ENCODE measurements at regions of chr15 and their contacts with region 1.

Region 1: DNA sequence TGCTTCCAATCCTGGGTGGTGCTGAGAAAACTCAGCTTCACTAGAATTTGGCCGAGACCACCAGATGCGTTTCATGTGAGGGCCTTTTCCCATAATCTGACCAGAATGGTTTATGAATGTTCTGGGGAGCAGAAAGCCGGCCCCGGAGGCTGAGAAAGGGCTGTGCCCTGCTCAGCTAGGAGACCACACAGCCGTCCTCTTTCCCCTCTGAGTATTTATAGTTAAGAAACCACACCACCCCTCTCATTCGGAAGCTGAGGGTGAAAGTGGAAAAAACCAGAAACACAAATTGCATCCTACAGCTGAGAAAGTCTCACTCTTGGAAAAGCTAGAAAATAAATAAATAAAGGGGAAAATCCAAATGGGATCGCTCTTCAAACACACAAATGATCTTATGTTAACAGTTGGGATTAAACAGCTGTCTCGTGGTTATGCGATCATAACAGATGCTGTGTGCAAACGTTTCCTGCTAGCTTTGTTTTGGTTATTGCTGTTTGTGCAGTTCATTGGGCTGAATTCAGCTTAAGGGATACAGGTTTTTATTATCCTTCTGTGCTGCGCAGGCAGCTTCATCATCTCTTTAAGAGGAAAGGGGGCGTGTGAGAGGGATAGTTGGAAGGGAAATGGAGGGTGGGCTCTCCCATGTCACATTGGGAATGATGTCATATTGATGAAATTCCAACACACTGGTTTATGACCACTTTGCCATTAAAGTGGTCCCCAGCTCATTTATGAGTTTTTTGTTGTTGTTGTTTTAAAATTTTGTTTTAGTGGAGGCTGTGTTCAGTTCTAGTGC is 1026.2 kb upstream of the NR2F2 start:
- DNase-seq: no peak
- H3K4me3 ChIP-seq: no peak overlapping the region
- H3K4me3 Mint-ChIP-seq: no peak overlapping the region
- H3K27ac ChIP-seq: no peak overlapping the region
- H3K27ac Mint-ChIP-seq: no peak overlapping the region
- H3K4me1 ChIP-seq: no peaks in the 10 kb centered on the region
- H3K4me1 Mint-ChIP-seq: peaks cover 0 to 2% (median 0%) of the 10 kb centered on the region in 4 donors
- H3K27me3 ChIP-seq: no peaks in the 10 kb centered on the region
- H3K27me3 Mint-ChIP-seq: peaks cover 0 to 2% of the 10 kb centered on the region in 2 donors

Region 2: GRCh38 chr15:95235033-95235432 is 69.3 kb before region 1 on chr15:
- CTCF ChIA-PET with region 1: no interaction called
- POLR2A ChIA-PET with region 1: no interaction called
- intact Hi-C with region 1: no loop called
- DNase-seq: no peak
- H3K4me3 ChIP-seq: no peak overlapping the region
- H3K4me3 Mint-ChIP-seq: no peak overlapping the region
- H3K27ac ChIP-seq: no peak overlapping the region
- H3K27ac Mint-ChIP-seq: no peak overlapping the region
- H3K4me1 ChIP-seq: no peaks in the 10 kb centered on the region
- H3K4me1 Mint-ChIP-seq: no peaks in the 10 kb centered on the region
- H3K27me3 ChIP-seq: no peaks in the 10 kb centered on the region
- H3K27me3 Mint-ChIP-seq: no peaks in the 10 kb centered on the region

Region 3: DNA sequence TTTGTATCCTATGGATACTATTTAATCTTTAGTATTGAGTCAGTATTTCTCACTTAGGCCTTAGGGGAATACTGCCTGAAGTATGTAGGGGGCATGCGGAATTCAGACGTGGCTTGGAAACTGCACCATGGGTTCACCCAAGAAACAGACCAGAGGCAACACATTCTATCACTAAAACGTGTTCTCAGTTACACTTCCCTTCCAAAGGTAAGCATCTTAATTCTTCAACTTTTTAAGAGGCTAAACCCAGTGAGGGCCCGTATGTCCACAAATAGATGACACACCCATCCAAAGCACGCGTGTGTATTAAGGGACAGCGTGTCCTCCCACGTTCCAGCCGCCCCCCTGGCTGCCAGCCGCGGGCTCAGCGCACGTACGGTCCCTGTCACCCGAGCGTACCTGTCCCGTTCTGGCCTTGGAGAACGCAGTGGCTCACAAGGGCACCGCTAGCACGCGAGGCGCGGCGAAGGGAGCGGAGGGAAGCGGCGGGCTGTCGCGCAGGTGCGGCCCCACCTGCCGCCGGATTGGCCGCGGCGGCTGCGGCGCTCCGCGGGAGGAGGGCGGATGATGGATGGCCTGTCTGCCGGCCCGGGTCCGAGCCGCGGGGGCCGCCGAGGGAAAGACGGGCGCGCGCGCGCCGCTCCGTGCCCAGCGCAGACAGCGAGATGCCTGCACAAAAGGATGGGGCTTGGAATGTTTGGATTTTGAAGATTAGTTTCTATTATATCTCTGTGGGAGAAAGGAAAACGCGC is 22.3 kb after region 1 on chr15:
- CTCF ChIA-PET with region 1: no interaction called
- POLR2A ChIA-PET with region 1: no interaction called
- intact Hi-C with region 1: no loop called
- DNase-seq: no peak
- H3K4me3 ChIP-seq: no peak overlapping the region
- H3K4me3 Mint-ChIP-seq: peak overlapping the region in 6 of 8 donors; percentile 12 to 53 (median 36)
- H3K27ac ChIP-seq: no peak overlapping the region
- H3K27ac Mint-ChIP-seq: no peak overlapping the region
- H3K4me1 ChIP-seq: no peaks in the 10 kb centered on the region
- H3K4me1 Mint-ChIP-seq: peaks cover 0 to 7% (median 2%) of the 10 kb centered on the region in 4 donors
- H3K27me3 ChIP-seq: no peaks in the 10 kb centered on the region
- H3K27me3 Mint-ChIP-seq: peaks cover 5 to 12% of the 10 kb centered on the region in 2 donors

Region 4: DNA sequence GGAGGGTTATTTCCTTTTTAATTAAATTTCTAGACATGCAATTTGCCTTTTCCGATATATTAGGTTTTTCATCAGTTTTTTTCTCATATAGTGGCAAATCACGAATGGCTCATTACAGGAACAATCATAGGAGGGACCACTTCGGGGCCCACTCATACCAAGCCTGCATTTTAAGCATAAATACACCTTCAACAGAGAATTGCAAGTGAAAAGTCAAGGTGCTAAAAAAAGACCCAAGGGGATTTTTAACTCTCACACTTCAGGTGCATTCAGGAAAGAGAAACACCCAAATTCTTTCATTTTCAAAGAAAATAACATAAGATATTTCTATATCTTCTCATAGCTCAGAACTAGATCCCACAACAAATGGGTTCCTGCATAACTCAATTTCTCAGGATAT is 46.6 kb after region 1 on chr15:
- CTCF ChIA-PET with region 1: no interaction called
- POLR2A ChIA-PET with region 1: no interaction called
- intact Hi-C with region 1: loop called (anchors 10 kb)
- DNase-seq: no peak
- H3K4me3 ChIP-seq: no peak overlapping the region
- H3K4me3 Mint-ChIP-seq: no peak overlapping the region
- H3K27ac ChIP-seq: no peak overlapping the region
- H3K27ac Mint-ChIP-seq: no peak overlapping the region
- H3K4me1 ChIP-seq: no peaks in the 10 kb centered on the region
- H3K4me1 Mint-ChIP-seq: no peaks in the 10 kb centered on the region
- H3K27me3 ChIP-seq: no peaks in the 10 kb centered on the region
- H3K27me3 Mint-ChIP-seq: peaks cover 0 to 1% of the 10 kb centered on the region in 2 donors

Measured in CD4-positive, alpha-beta memory T cell (primary cell).